Activated T-helper 2 cell treated with anti-CD3 and anti-CD28 coated beads, Interferon-gamma antibody, Interleukin-2, Interleukin-4, amounts not matched to agents 10 μg/mL and 5 μg/mL and 100 μg/mL, durations not matched to agents 14 hours and 24 hours and 36 hours (primary cell): ENCODE measurements at regions of chr18 and their contacts with region 1.

Region 1: GRCh38 chr18:75478996-75479880 is 51.7 kb upstream of the SMIM21 start:
- DNase-seq: no peak
- H3K4me3 Mint-ChIP-seq: no peak overlapping the region
- H3K27ac Mint-ChIP-seq: no peak overlapping the region
- H3K4me1 Mint-ChIP-seq: no peaks in the 10 kb centered on the region
- H3K27me3 Mint-ChIP-seq: peaks cover 2% of the 10 kb centered on the region

Region 2: GRCh38 chr18:74652392-74652988 is 826.7 kb before region 1 on chr18:
- intact Hi-C with region 1: loop called (anchors 2 kb)
- DNase-seq: no peak
- H3K4me3 Mint-ChIP-seq: no peak overlapping the region
- H3K27ac Mint-ChIP-seq: no peak overlapping the region
- H3K4me1 Mint-ChIP-seq: no peaks in the 10 kb centered on the region
- H3K27me3 Mint-ChIP-seq: no peaks in the 10 kb centered on the region

Region 3: DNA sequence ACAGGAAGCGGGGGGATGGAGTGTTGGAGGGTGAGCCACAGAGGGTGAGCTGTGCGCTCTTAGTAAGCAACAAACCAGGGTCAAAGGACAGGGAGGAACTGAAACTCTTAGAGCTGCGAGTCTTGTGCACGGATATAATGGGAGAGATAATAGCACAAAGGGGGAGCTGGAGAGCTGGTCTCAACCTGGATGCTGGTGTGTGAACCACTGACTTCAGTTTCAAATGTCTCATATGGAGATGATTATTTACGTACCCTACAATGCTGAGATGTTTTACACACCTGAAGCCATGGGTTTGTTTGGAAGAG is 306.2 kb before region 1 on chr18:
- intact Hi-C with region 1: loop called (anchors 10 kb)
- DNase-seq: no peak
- H3K4me3 Mint-ChIP-seq: no peak overlapping the region
- H3K27ac Mint-ChIP-seq: no peak overlapping the region
- H3K4me1 Mint-ChIP-seq: peaks cover 1% of the 10 kb centered on the region
- H3K27me3 Mint-ChIP-seq: peaks cover 7% of the 10 kb centered on the region